B cell (primary cell): ENCODE measurements at regions of chr6 and their contacts with region 1.

Region 1: DNA sequence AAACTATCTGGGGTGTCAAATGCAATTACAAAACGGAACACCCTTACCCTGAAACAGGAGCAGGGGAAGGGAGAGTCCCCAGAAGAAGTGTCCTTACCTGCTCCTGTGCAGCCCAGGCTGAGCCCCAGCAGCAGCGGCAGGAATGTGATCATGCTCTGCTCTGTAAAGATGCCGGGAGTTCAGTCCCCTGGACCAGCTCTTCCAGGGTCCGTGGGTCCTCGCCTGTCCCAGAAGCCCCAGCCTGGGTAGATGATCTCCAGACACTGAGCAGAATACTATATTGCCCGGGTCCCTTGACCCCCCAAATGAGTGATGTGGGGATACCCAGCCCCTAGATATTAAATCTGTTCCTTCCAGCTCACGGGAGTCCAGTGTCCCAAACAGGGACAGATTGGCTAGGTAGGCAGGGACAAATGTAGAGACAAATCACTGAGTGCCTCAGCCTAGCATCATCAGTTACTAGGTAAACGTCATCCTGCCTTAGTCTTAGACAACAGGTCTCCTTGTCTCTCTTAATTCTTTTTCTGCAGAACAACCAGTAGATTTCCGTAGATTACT is at the start of gene HLA-DMB:
- DNase-seq: peak; percentile 91
- ATAC-seq: peak; percentile 51
- H3K4me3 ChIP-seq: peak within 1 kb of the TSS; percentile 95 to 100 (median 96)
- H3K4me3 Mint-ChIP-seq: peak within 1 kb of the TSS; percentile 96
- H3K27ac ChIP-seq: peak within 1 kb of the TSS; percentile 97 to 98
- H3K27ac Mint-ChIP-seq: peak within 1 kb of the TSS; percentile 99
- H3K4me1 ChIP-seq: peaks cover 66 to 82% of the 10 kb centered on the region in 2 donors
- H3K4me1 Mint-ChIP-seq: peaks cover 80% of the 10 kb centered on the region
- H3K27me3 ChIP-seq: no peaks in the 10 kb centered on the region
- H3K27me3 Mint-ChIP-seq: no peaks in the 10 kb centered on the region
- CTCF ChIP-seq: no peak
- total RNA-seq, gene HLA-DMB: 587 and 593 TPM in 2 replicates

Region 2: GRCh38 chr6:32439602-32440214 is 501.0 kb before region 1 on chr6 and contains the start of gene HLA-DRA:
- CTCF ChIA-PET with region 1: no interaction called
- POLR2A ChIA-PET with region 1: interaction called, 10 read pairs
- intact Hi-C with region 1: no loop called
- DNase-seq: peak; percentile 97
- ATAC-seq: peak; percentile 69
- H3K4me3 ChIP-seq: peak within 1 kb of the TSS; percentile 77 to 100 (median 99)
- H3K4me3 Mint-ChIP-seq: peak within 1 kb of the TSS; percentile 98
- H3K27ac ChIP-seq: peak within 1 kb of the TSS; percentile 99 to 100
- H3K27ac Mint-ChIP-seq: peak within 1 kb of the TSS; percentile 99
- H3K4me1 ChIP-seq: peaks cover 70 to 71% of the 10 kb centered on the region in 2 donors
- H3K4me1 Mint-ChIP-seq: peaks cover 80% of the 10 kb centered on the region
- H3K27me3 ChIP-seq: no peaks in the 10 kb centered on the region
- H3K27me3 Mint-ChIP-seq: no peaks in the 10 kb centered on the region
- CTCF ChIP-seq: no peak
- total RNA-seq, gene HLA-DRA: 2,785 and 2,881 TPM in 2 replicates

Region 3: DNA sequence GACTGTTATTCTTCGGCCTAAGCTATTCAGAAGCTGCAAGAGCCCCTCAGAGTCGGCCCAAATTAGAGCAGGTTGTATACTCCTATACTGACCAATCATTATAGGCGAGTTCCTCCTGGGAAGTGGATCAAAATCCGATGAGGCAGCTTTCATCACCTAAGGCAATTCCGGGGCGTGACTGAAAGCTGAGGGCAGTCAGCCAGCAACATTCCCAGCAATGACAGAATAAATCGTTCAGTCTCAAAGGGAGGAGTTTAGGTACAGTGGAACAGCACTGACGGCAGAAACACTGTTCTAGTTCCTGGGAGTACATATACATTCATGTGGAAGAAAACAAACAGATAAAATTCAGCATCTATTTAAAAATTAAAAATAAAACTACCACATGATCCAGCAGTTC is 188.2 kb before region 1 on chr6:
- CTCF ChIA-PET with region 1: no interaction called
- POLR2A ChIA-PET with region 1: no interaction called
- intact Hi-C with region 1: no loop called
- DNase-seq: no peak
- ATAC-seq: no peak
- H3K4me3 ChIP-seq: no peak overlapping the region
- H3K4me3 Mint-ChIP-seq: no peak overlapping the region
- H3K27ac ChIP-seq: no peak overlapping the region
- H3K27ac Mint-ChIP-seq: no peak overlapping the region
- H3K4me1 ChIP-seq: peaks cover 0 to 2% of the 10 kb centered on the region in 2 donors
- H3K4me1 Mint-ChIP-seq: peaks cover 1% of the 10 kb centered on the region
- H3K27me3 ChIP-seq: peaks cover 0 to 5% (median 0%) of the 10 kb centered on the region in 4 experiments
- H3K27me3 Mint-ChIP-seq: peaks cover 26% of the 10 kb centered on the region
- CTCF ChIP-seq: no peak

Region 4: DNA sequence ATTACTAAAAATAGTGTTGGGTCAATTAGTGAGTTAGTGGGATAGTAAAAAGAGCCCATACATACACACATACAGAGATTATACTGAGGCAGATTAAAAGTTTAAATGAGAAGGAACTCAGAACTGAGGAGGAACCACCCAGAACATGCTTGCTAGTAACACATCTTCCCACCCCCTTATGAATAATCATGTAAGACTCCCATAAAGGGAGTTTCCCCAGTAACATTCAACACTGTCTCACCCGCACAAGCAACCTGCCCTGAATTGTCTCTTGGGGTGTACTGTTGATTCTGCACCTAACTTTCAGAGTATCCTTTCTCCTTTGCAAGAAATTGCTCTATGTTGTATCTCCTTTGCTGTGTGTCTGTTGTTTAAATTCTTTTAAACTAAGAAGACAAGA is 166.3 kb before region 1 on chr6:
- CTCF ChIA-PET with region 1: no interaction called
- POLR2A ChIA-PET with region 1: no interaction called
- intact Hi-C with region 1: no loop called
- DNase-seq: peak; percentile 42
- ATAC-seq: peak; percentile 54
- H3K4me3 ChIP-seq: no peak overlapping the region
- H3K4me3 Mint-ChIP-seq: no peak overlapping the region
- H3K27ac ChIP-seq: no peak overlapping the region
- H3K27ac Mint-ChIP-seq: no peak overlapping the region
- H3K4me1 ChIP-seq: peaks cover 0 to 4% of the 10 kb centered on the region in 2 donors
- H3K4me1 Mint-ChIP-seq: peaks cover 4% of the 10 kb centered on the region
- H3K27me3 ChIP-seq: peaks cover 0 to 6% (median 2%) of the 10 kb centered on the region in 4 experiments
- H3K27me3 Mint-ChIP-seq: peaks cover 13% of the 10 kb centered on the region
- CTCF ChIP-seq: no peak

Region 5: GRCh38 chr6:32838114-32838958 is 102.4 kb before region 1 on chr6 and contains the start of gene TAP2:
- CTCF ChIA-PET with region 1: interaction called, 12 read pairs
- POLR2A ChIA-PET with region 1: interaction called, 17 read pairs
- intact Hi-C with region 1: no loop called
- DNase-seq: peak; percentile 97
- ATAC-seq: peak; percentile 84
- H3K4me3 ChIP-seq: peak within 1 kb of the TSS; percentile 71 to 80 (median 76)
- H3K4me3 Mint-ChIP-seq: peak within 1 kb of the TSS; percentile 97
- H3K27ac ChIP-seq: peak within 1 kb of the TSS; percentile 83 to 97
- H3K27ac Mint-ChIP-seq: peak within 1 kb of the TSS; percentile 99
- H3K4me1 ChIP-seq: peaks cover 59 to 73% of the 10 kb centered on the region in 2 donors
- H3K4me1 Mint-ChIP-seq: peaks cover 92% of the 10 kb centered on the region
- H3K27me3 ChIP-seq: no peaks in the 10 kb centered on the region
- H3K27me3 Mint-ChIP-seq: no peaks in the 10 kb centered on the region
- CTCF ChIP-seq: peak; percentile 90
- total RNA-seq, gene TAP2: 126 and 135 TPM in 2 replicates

Region 6: DNA sequence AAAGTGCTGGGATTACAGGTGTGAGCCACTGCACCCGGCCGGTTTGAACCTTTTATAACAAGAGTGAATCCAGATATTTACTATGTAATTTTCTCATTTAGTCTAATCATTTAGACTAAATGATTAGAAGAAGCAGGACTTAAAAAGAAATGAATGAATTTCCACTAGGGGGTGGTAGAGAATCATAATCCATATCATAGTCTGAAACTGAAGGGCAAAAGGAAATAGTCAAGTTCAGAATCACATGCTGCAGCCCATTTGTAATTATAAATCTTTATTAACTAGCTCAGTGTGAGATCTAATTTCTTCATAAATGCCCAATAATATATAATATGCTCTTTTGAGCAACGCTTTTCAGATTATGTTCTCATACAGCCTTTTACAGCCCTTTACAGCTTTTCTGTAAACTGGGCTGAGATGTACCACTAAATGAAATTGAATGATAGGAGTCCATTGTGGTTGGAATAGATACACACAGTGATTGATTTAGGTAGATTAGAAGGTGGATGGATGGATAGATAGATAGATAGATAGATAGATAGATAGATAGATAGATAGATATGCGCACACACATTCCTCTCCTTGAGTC is 54.9 kb before region 1 on chr6:
- CTCF ChIA-PET with region 1: interaction called, 57 read pairs
- POLR2A ChIA-PET with region 1: interaction called, 7 read pairs
- intact Hi-C with region 1: no loop called
- DNase-seq: peak; percentile 87
- ATAC-seq: peak; percentile 65
- H3K4me3 ChIP-seq: no peak overlapping the region
- H3K4me3 Mint-ChIP-seq: no peak overlapping the region
- H3K27ac ChIP-seq: no peak overlapping the region
- H3K27ac Mint-ChIP-seq: no peak overlapping the region
- H3K4me1 ChIP-seq: peaks cover 14 to 15% of the 10 kb centered on the region in 2 donors
- H3K4me1 Mint-ChIP-seq: peaks cover 23% of the 10 kb centered on the region
- H3K27me3 ChIP-seq: no peaks in the 10 kb centered on the region
- H3K27me3 Mint-ChIP-seq: no peaks in the 10 kb centered on the region
- CTCF ChIP-seq: peak; percentile 78

Region 7: GRCh38 chr6:32952817-32953739 is 12.3 kb after region 1 on chr6 and contains the start of gene HLA-DMA:
- CTCF ChIA-PET with region 1: interaction called, 462 read pairs
- POLR2A ChIA-PET with region 1: interaction called, 131 read pairs
- intact Hi-C with region 1: loop called (anchors 1 kb)
- DNase-seq: peak; percentile 97
- ATAC-seq: peak; percentile 91
- H3K4me3 ChIP-seq: peak within 1 kb of the TSS; percentile 72 to 98 (median 93)
- H3K4me3 Mint-ChIP-seq: peak within 1 kb of the TSS; percentile 96
- H3K27ac ChIP-seq: peak within 1 kb of the TSS; percentile 91 to 92
- H3K27ac Mint-ChIP-seq: peak within 1 kb of the TSS; percentile 98
- H3K4me1 ChIP-seq: peaks cover 70 to 84% of the 10 kb centered on the region in 2 donors
- H3K4me1 Mint-ChIP-seq: peaks cover 85% of the 10 kb centered on the region
- H3K27me3 ChIP-seq: no peaks in the 10 kb centered on the region
- H3K27me3 Mint-ChIP-seq: no peaks in the 10 kb centered on the region
- CTCF ChIP-seq: peak; percentile 88
- total RNA-seq, gene HLA-DMA: 554 and 558 TPM in 2 replicates